PC-9 (cell line): ENCODE measurements at regions of chr6 and their contacts with region 1.

Region 1: DNA sequence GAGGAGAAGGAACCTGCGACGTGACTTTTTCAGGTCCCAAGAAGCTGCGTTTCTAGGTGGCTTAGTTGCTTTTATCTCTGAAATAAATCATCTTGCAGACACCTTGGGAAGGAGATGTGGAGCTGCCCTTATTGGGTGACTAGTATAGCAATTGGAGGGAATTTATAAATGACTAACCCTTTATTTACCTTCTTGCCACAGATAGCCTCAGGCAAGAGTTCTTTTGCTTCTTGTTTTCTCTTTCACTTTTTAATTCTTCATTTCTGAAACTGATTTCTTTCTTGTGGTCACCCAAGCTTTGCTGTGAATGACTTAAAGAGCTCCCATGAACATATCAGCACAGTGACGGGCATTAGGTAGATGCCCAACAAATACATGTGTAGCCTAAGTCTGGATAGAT is 3.0 kb downstream of the ADGRF4 start:
- DNase-seq: peak; percentile 31 to 97
- H3K4me3 ChIP-seq: peak overlapping the region; percentile 76; the same call in 1 of the 2 replicates
- H3K27ac ChIP-seq: peak overlapping the region; percentile 100
- H3K4me1 ChIP-seq: peaks cover 55% of the 10 kb centered on the region
- H3K27me3 ChIP-seq: no peaks in the 10 kb centered on the region
- CTCF ChIP-seq: no peak

Region 2: GRCh38 chr6:46983007-46983411 is 718.3 kb before region 1 on chr6:
- CTCF ChIA-PET with region 1: no interaction called
- POLR2A ChIA-PET with region 1: no interaction called
- intact Hi-C with region 1: no loop called
- DNase-seq: peak; percentile 14 to 98
- H3K4me3 ChIP-seq: no peak overlapping the region
- H3K27ac ChIP-seq: peak overlapping the region; percentile 70
- H3K4me1 ChIP-seq: peaks cover 61% of the 10 kb centered on the region
- H3K27me3 ChIP-seq: no peaks in the 10 kb centered on the region
- CTCF ChIP-seq: peak; percentile 36; the same call in 1 of the 2 replicates

Region 3: DNA sequence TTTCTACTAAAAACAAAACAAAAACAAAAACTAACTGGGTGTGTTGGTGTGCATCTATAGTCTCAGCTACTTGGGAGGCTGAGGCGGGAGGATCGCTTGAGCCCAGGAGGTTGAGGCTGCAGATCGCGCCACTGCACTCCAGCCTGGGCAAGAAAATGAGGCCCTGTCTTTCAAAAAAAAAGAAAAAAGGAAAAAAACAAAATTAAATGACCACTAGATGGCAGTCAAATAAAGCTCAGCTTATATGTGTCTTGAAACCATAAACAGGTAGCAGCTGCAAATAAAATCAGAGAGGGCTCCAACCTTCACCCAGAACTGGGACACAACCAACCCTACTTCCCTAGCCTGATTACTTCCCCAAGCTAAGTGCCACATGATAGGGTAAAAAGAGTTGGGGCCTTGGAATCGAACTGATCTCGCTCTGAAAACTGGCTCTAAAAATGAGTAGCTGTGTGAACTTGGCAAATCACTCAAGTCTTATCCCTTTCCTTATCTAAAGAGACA is 70.0 kb before region 1 on chr6:
- CTCF ChIA-PET with region 1: no interaction called
- POLR2A ChIA-PET with region 1: no interaction called
- intact Hi-C with region 1: loop called (anchors 2 kb)
- DNase-seq: peak; percentile 18 to 70
- H3K4me3 ChIP-seq: no peak overlapping the region
- H3K27ac ChIP-seq: no peak overlapping the region
- H3K4me1 ChIP-seq: peaks cover 5% of the 10 kb centered on the region
- H3K27me3 ChIP-seq: no peaks in the 10 kb centered on the region
- CTCF ChIP-seq: peak; percentile 89

Region 4: GRCh38 chr6:47655719-47656595 is 45.4 kb before region 1 on chr6:
- CTCF ChIA-PET with region 1: no interaction called
- POLR2A ChIA-PET with region 1: no interaction called
- intact Hi-C with region 1: loop called (anchors 2 kb)
- DNase-seq: peak; percentile 78 to 84
- H3K4me3 ChIP-seq: no peak overlapping the region
- H3K27ac ChIP-seq: 0 out of 2 replicates have a peak overlapping the region, but pooled peaks have one; percentile 22
- H3K4me1 ChIP-seq: peaks cover 30% of the 10 kb centered on the region
- H3K27me3 ChIP-seq: no peaks in the 10 kb centered on the region
- CTCF ChIP-seq: no peak

Region 5: DNA sequence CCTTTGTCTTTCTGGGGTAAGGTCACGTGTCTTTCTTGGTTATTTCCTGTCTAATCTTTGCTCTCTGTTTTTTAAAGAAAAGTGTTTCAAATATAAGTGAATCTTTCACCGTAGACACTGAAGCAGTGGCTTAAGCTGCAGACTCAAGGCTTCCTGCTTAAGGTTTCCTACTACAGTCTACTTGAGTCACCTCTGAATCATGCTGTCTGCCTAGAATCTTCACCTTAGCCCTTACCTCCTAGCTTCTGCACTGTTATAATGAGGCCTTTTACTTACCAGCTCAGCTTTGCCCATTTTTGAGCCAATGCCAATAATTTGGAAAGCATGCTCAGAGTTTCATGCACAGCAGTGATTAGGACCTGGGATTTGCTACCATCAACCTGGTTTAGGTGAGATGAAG is 27.7 kb after region 1 on chr6:
- CTCF ChIA-PET with region 1: no interaction called
- POLR2A ChIA-PET with region 1: interaction called, 3 read pairs
- intact Hi-C with region 1: loop called (anchors 2 kb)
- DNase-seq: peak; percentile 17 to 83
- H3K4me3 ChIP-seq: no peak overlapping the region
- H3K27ac ChIP-seq: peak overlapping the region; percentile 68
- H3K4me1 ChIP-seq: peaks cover 30% of the 10 kb centered on the region
- H3K27me3 ChIP-seq: no peaks in the 10 kb centered on the region
- CTCF ChIP-seq: no peak

Region 6: DNA sequence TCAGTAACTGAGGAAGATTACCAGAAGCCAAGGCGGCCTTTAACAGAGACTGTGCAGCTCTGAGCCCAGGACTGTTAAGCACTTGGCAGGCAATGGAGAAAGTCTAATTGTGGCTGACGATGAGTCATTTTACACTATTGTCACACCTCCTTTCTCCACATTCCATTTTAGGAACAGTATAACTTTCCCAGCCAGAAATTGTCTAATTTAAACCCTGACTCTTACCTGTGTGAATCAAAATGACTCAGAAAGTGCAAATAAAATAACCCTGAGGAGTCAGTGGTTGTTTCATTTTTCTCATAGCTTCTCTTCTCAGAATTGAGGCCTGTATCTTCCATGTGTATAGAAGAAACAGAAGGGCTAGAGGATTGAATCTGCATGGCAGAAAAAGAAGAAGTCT is 40.5 kb after region 1 on chr6:
- CTCF ChIA-PET with region 1: no interaction called
- POLR2A ChIA-PET with region 1: no interaction called
- intact Hi-C with region 1: loop called (anchors 5 kb)
- DNase-seq: peak; percentile 29 to 88
- H3K4me3 ChIP-seq: no peak overlapping the region
- H3K27ac ChIP-seq: peak overlapping the region; percentile 81
- H3K4me1 ChIP-seq: peaks cover 15% of the 10 kb centered on the region
- H3K27me3 ChIP-seq: no peaks in the 10 kb centered on the region
- CTCF ChIP-seq: no peak

Region 7: GRCh38 chr6:48691420-48691819 is 990.1 kb after region 1 on chr6:
- CTCF ChIA-PET with region 1: no interaction called
- POLR2A ChIA-PET with region 1: interaction called, 10 read pairs
- intact Hi-C with region 1: no loop called
- DNase-seq: no peak
- H3K4me3 ChIP-seq: no peak overlapping the region
- H3K27ac ChIP-seq: no peak overlapping the region
- H3K4me1 ChIP-seq: no peaks in the 10 kb centered on the region
- H3K27me3 ChIP-seq: no peaks in the 10 kb centered on the region
- CTCF ChIP-seq: no peak